CD14-positive monocyte (primary cell): ENCODE measurements at regions of chr18 and their contacts with region 1.

Region 1: GRCh38 chr18:63422087-63422809 is at the start of gene VPS4B:
- DNase-seq: peak; percentile 100
- H3K4me3 ChIP-seq: peak within 1 kb of the TSS; percentile 85 to 94 (median 91)
- H3K4me3 Mint-ChIP-seq: peak within 1 kb of the TSS; percentile 97 to 98
- H3K27ac ChIP-seq: peak within 1 kb of the TSS; percentile 88 to 98
- H3K27ac Mint-ChIP-seq: peak within 1 kb of the TSS; percentile 97 to 99 (median 99)
- H3K4me1 ChIP-seq: peaks cover 16 to 23% of the 10 kb centered on the region in 2 donors
- H3K4me1 Mint-ChIP-seq: peaks cover 18% of the 10 kb centered on the region
- H3K27me3 ChIP-seq: no peaks in the 10 kb centered on the region
- H3K27me3 Mint-ChIP-seq: peaks cover 0 to 6% (median 0%) of the 10 kb centered on the region in 3 donors
- CTCF ChIP-seq: no peak
- polyA plus RNA-seq, gene VPS4B: 15.4 to 48.8 (median 26.7) TPM

Region 2: GRCh38 chr18:63367053-63367953 is 54.9 kb before region 1 on chr18 and contains the start of gene KDSR:
- intact Hi-C with region 1: loop called (anchors 5 to 10 kb)
- DNase-seq: peak; percentile 76 to 85 (median 78)
- H3K4me3 ChIP-seq: peak within 1 kb of the TSS; percentile 59 to 82 (median 72)
- H3K4me3 Mint-ChIP-seq: peak within 1 kb of the TSS; percentile 84 to 97
- H3K27ac ChIP-seq: peak within 1 kb of the TSS; percentile 73 to 78
- H3K27ac Mint-ChIP-seq: peak within 1 kb of the TSS; percentile 73 to 89 (median 87)
- H3K4me1 ChIP-seq: peaks cover 14 to 22% of the 10 kb centered on the region in 2 donors
- H3K4me1 Mint-ChIP-seq: peaks cover 25% of the 10 kb centered on the region
- H3K27me3 ChIP-seq: peaks cover 0 to 5% of the 10 kb centered on the region in 2 donors
- H3K27me3 Mint-ChIP-seq: peaks cover 5 to 8% (median 6%) of the 10 kb centered on the region in 3 donors
- CTCF ChIP-seq: no peak
- polyA plus RNA-seq, gene KDSR: 9.6 to 38.5 (median 29.9) TPM

Region 3: GRCh38 chr18:63539904-63540510 is 117.8 kb after region 1 on chr18:
- intact Hi-C with region 1: no loop called
- DNase-seq: no peak
- H3K4me3 ChIP-seq: no peak overlapping the region
- H3K4me3 Mint-ChIP-seq: no peak overlapping the region
- H3K27ac ChIP-seq: no peak overlapping the region
- H3K27ac Mint-ChIP-seq: no peak overlapping the region
- H3K4me1 ChIP-seq: no peaks in the 10 kb centered on the region
- H3K4me1 Mint-ChIP-seq: no peaks in the 10 kb centered on the region
- H3K27me3 ChIP-seq: no peaks in the 10 kb centered on the region
- H3K27me3 Mint-ChIP-seq: peaks cover 1 to 7% (median 1%) of the 10 kb centered on the region in 3 donors
- CTCF ChIP-seq: no peak

Region 4: GRCh38 chr18:63969960-63970802 is 547.9 kb after region 1 on chr18 and contains the start of gene SERPINB8:
- intact Hi-C with region 1: loop called in 1 of 2 experiments (anchors 10 kb)
- DNase-seq: peak; percentile 92 to 97 (median 96)
- H3K4me3 ChIP-seq: peak within 1 kb of the TSS; percentile 55 to 94 (median 81)
- H3K4me3 Mint-ChIP-seq: peak within 1 kb of the TSS; percentile 91 to 98
- H3K27ac ChIP-seq: peak within 1 kb of the TSS; percentile 95 to 98
- H3K27ac Mint-ChIP-seq: peak within 1 kb of the TSS; percentile 95 to 99 (median 98)
- H3K4me1 ChIP-seq: peaks cover 64 to 67% of the 10 kb centered on the region in 2 donors
- H3K4me1 Mint-ChIP-seq: peaks cover 82% of the 10 kb centered on the region
- H3K27me3 ChIP-seq: no peaks in the 10 kb centered on the region
- H3K27me3 Mint-ChIP-seq: peaks cover 0 to 2% (median 0%) of the 10 kb centered on the region in 3 donors
- CTCF ChIP-seq: no peak
- polyA plus RNA-seq, gene SERPINB8: 30.3 to 141 (median 115) TPM